ENCODE measurements at regions of chr16 and their contacts with region 1.

Region 1: DNA sequence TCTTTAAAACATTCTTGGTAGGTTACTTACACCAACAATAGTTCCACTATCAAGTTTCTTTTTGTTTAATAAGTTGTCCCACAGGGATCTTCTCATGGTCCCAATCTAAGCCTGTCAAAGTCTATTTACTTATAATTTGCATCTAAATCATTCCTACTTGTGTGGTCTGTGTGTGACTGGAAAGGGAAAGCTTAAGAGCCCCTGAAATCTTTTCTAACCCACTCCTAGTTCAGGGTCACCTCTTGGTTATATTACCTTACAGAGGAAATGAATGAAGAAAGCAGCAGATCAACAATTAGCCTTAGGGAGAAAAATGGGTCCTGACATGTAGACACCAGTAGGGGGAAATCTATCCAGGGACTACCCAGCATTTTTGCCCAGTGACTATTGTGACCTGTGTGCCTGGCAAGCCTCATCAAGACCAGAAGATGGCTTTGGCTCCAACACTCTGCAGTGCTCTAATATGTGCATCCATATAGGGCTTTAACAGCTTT is 110.4 kb upstream of the HAS3 start:
- DNase-seq: peak; percentile 78
- ATAC-seq: peak; percentile 85
- H3K4me3 ChIP-seq: no peak overlapping the region
- H3K27ac ChIP-seq: no peak overlapping the region
- H3K4me1 ChIP-seq: peaks cover 60% of the 10 kb centered on the region
- H3K27me3 ChIP-seq: no peaks in the 10 kb centered on the region
- CTCF ChIP-seq: peak; percentile 63
- EP300 ChIP-seq: no peak
- POLR2A ChIP-seq: no peak
- RAD21 ChIP-seq: peak; percentile 72

Region 2: GRCh38 chr16:68972720-68973119 is 22.3 kb before region 1 on chr16:
- CTCF ChIA-PET with region 1: no interaction called
- POLR2A ChIA-PET with region 1: interaction called, 3 read pairs
- in situ Hi-C with region 1: no loop called
- intact Hi-C with region 1: loop called (anchors 1 kb)
- DNase-seq: no peak
- ATAC-seq: peak; percentile 30; the same call in 1 of the 3 replicates
- H3K4me3 ChIP-seq: no peak overlapping the region
- H3K27ac ChIP-seq: no peak overlapping the region
- H3K4me1 ChIP-seq: no peaks in the 10 kb centered on the region
- H3K27me3 ChIP-seq: no peaks in the 10 kb centered on the region
- CTCF ChIP-seq: 0 out of 2 replicates have a peak, but pooled peaks have one; percentile 25
- EP300 ChIP-seq: no peak
- POLR2A ChIP-seq: no peak
- RAD21 ChIP-seq: no peak

Region 3: GRCh38 chr16:69040138-69040909 is 45.3 kb after region 1 on chr16:
- CTCF ChIA-PET with region 1: interaction called, 4 read pairs
- POLR2A ChIA-PET with region 1: no interaction called
- in situ Hi-C with region 1: no loop called
- intact Hi-C with region 1: loop called (anchors 5 kb)
- DNase-seq: peak; percentile 89
- ATAC-seq: peak; percentile 86
- H3K4me3 ChIP-seq: peak overlapping the region in 1 of 3 experiments; percentile 12; a peak in 1 of 6 replicates
- H3K27ac ChIP-seq: peak overlapping the region; percentile 68
- H3K4me1 ChIP-seq: peaks cover 23% of the 10 kb centered on the region
- H3K27me3 ChIP-seq: no peaks in the 10 kb centered on the region
- CTCF ChIP-seq: no peak
- EP300 ChIP-seq: peak in 1 of 2 experiments; percentile 64; a peak in 2 of 4 replicates
- POLR2A ChIP-seq: no peak; a peak in 1 of 4 replicates
- RAD21 ChIP-seq: no peak

Region 4: GRCh38 chr16:69105489-69106361 is 110.7 kb after region 1 on chr16 and contains the start of gene HAS3:
- CTCF ChIA-PET with region 1: no interaction called
- POLR2A ChIA-PET with region 1: no interaction called
- in situ Hi-C with region 1: loop called (anchors 10 kb)
- intact Hi-C with region 1: loop called (anchors 10 kb)
- DNase-seq: peak; percentile 34
- ATAC-seq: peak; percentile 86
- H3K4me3 ChIP-seq: peak within 1 kb of the TSS; percentile 61 to 85 (median 77)
- H3K27ac ChIP-seq: no peak within 1 kb of the TSS
- H3K4me1 ChIP-seq: peaks cover 19% of the 10 kb centered on the region
- H3K27me3 ChIP-seq: peaks cover 4 to 32% of the 10 kb centered on the region in 2 experiments; a peak in 4 of 5 replicates
- CTCF ChIP-seq: peak; percentile 69
- EP300 ChIP-seq: no peak
- POLR2A ChIP-seq: peak; percentile 28 to 49; a peak in 1 of 4 replicates
- RAD21 ChIP-seq: 0 out of 2 replicates have a peak, but pooled peaks have one; percentile 33
- total RNA-seq, gene HAS3: 0.04 TPM in 1 of 2 replicates, not detected in the other